ENCODE measurements at regions of chr2 and their contacts with region 1.

Region 1: DNA sequence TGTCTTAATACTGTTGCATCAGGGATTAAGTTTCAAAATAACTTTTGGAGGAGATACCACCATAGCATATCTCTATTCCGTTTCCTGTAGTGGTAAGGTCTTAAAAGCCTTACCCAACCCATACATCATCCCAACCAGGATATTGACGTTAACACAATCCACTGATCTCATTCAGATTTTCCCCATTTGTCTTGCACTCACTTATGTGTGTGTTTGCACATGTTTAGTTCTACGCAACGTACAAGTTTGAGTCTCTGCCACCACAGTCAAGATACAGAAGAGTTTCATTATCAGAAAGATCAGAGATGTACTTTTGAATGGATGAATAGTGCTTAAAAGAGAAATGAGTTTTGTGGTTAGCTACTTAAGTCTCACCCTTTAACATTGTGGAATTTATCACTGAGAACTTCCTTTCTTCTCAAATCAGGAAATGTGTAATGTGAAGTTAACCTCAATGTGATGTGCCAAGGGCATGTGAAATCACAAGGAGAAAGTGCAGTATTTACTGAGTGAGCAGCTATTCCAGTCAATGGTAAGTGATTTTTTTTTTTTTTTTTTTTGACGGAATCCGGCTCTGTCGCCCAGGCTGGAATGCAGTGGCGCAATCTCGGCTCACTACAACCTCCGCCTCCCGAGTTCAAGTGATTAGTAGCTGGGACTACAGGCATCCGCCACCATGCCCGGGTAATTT is 69.2 kb upstream of the EPHA4 start:
- DNase-seq: peak; percentile 94
- H3K4me3 ChIP-seq: no peak overlapping the region
- H3K27ac ChIP-seq: peak overlapping the region; percentile 53
- H3K4me1 ChIP-seq: peaks cover 13% of the 10 kb centered on the region
- H3K27me3 ChIP-seq: no peaks in the 10 kb centered on the region
- CTCF ChIP-seq: no peak
- POLR2A ChIP-seq: no peak

Region 2: DNA sequence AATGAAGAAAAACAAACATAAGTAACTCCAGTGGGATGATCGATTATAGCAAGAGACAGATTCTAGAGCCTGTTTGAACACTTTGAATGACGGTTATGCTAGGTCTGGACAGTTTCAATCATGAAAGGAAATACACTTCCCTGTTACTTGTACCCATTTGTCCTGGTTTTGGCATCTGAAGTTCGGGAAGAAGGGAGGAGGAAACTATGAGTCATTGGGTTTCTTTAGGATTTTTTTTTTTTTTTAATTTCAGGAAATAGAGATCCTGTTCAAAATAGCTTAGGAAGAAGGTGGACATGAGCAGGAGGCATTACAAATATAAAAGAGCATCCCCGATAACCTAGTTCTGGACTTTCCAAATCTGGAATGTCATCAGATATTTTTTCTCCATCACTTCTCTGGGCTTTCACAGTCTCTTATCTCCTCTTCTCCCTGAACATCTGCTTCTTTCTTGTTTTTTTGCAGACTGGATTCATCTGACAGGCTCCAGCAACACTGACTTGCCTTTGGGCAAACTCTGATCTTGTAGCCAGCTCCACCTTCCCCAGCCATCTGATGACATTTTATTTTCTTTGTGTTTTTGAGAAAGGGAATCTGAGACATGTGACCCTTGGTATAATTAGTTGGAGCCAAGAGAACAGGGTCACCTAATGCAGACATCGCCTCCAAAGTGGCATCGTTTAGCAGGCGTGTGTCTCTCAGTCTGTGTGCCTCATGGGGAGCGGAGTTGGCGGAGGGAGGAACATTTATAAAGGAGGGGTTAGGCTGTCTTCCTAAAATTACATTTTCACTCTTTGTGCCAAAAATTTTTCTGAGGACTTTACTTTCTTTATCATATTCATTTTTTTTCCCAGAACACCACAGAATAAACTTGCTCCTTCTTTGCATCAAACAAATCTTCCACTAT is 126.0 kb after region 1 on chr2:
- CTCF ChIA-PET with region 1: no interaction called
- POLR2A ChIA-PET with region 1: no interaction called
- dilution Hi-C with region 1: no loop called
- intact Hi-C with region 1: loop called (anchors 1 kb)
- DNase-seq: peak; percentile 66
- H3K4me3 ChIP-seq: no peak overlapping the region
- H3K27ac ChIP-seq: peak overlapping the region; percentile 53
- H3K4me1 ChIP-seq: peaks cover 15% of the 10 kb centered on the region
- H3K27me3 ChIP-seq: no peaks in the 10 kb centered on the region
- CTCF ChIP-seq: no peak
- POLR2A ChIP-seq: no peak

Measured in endothelial cell of umbilical vein (primary cell).